ENCODE measurements at regions of chr7 and their contacts with region 1.

Region 1: GRCh38 chr7:22110227-22110839 is 164.6 kb upstream of the CDCA7L start:
- DNase-seq: peak; percentile 68
- CTCF ChIP-seq: peak; percentile 84

Region 2: GRCh38 chr7:22082886-22083703 is 27.2 kb before region 1 on chr7:
- CTCF ChIA-PET with region 1: interaction called, 11 read pairs
- POLR2A ChIA-PET with region 1: no interaction called
- DNase-seq: peak; percentile 89
- CTCF ChIP-seq: peak; percentile 96

Region 3: GRCh38 chr7:22094413-22095342 is 15.7 kb before region 1 on chr7:
- CTCF ChIA-PET with region 1: interaction called, 35 read pairs
- POLR2A ChIA-PET with region 1: no interaction called
- DNase-seq: no peak
- CTCF ChIP-seq: no peak

Region 4: GRCh38 chr7:22127835-22128527 is 17.6 kb after region 1 on chr7:
- CTCF ChIA-PET with region 1: interaction called, 13 read pairs
- POLR2A ChIA-PET with region 1: no interaction called
- DNase-seq: no peak
- CTCF ChIP-seq: no peak

Region 5: GRCh38 chr7:22193450-22193983 is 83.2 kb after region 1 on chr7:
- CTCF ChIA-PET with region 1: no interaction called
- POLR2A ChIA-PET with region 1: no interaction called
- DNase-seq: no peak
- CTCF ChIP-seq: no peak

Region 6: DNA sequence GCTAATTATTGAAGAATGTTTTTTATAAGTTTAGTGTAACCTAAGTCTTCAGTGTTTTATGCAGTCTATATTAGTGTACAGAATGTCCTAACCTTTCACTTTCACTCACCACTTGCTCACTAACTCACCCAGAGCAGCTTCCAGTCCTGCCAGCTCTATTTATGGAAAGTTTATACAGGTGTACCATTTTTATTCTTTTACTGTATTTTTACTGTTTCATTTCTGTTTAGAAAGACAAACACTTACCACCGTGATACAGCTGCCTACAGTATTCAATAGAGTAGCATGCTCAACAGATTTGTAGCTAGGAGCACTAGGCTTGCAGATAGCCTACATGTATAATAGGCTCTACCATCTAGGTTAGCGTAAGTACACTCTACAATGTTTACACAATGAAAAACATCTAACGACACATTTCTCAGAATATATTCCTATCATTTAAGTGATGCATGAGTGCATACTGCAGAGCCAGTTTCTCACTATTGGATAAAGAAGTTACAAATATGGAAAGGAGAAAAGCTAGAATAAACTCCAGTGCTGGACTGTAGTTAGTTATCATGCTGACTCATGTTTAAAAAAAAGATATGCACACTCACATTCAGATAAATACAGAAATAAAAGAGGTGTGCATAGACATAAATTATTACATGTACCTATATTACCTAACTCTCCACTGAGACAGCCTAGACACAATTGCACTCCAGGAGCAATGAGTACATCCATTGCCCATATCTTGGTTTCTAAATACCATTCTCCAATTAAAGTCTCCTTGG is 359.2 kb after region 1 on chr7:
- CTCF ChIA-PET with region 1: interaction called, 20 read pairs
- POLR2A ChIA-PET with region 1: no interaction called
- DNase-seq: no peak
- CTCF ChIP-seq: no peak

Region 7: DNA sequence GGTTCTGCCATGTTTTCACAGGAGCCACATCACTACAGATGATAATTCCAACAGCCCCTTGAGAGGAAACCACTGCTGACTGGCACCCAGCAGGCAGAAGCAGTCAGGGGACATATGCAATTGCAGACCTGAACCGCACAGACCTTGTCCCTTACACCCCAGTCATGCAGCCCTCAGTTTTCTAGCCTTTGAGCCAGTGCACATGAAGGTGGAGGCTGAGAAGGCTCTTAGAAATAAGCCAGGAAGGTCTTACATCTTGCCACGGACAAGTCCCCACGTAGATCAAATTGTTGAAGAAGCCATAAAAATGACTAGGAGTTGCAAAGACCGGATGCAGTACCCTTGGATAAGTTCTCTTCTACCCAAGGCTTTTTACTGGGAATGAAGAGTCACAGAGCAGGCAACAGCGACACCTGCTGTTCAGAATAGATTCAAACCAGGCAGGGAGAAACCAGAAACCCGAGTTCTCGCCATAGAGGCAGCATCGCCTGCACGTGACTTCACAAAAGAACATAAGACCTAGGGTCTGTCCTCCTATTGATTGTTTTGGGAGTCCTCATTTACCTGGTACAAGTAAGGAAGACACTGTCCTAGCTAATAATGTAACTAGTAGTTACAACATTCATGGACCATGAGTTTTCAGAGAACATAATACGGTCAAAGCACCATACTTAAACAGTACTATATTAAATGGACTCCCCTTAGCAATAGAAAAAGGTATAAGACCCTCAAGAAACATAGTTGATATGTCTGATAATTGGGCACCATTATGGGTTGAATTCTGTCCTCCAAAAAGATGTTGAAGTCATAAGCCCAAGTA is 378.5 kb after region 1 on chr7:
- CTCF ChIA-PET with region 1: interaction called, 94 read pairs
- POLR2A ChIA-PET with region 1: no interaction called
- DNase-seq: peak; percentile 64
- CTCF ChIP-seq: peak; percentile 87

Measured in GM10248 (cell line).